ENCODE measurements at regions of chr2 and their contacts with region 1.

Region 1: DNA sequence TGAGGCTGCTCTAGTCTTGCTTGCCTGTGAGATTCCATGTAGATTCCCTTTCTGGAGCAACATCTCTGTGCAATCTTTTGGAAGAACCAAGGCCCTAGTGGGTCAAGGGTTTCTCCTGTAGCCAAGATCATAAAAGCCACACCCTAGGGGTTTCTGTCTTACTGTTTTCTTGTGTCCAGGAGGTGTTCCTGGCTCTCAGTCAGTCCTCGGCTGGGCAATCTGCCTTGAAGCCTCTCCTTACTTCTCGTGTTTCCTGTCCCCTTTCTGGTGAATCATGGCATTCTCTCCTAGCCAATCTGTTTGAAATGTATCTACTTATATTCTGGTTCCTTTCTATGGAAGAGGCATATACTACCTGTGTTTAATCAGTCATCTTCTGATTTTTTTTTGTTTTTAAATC is 484.8 kb upstream of the UBE2E3 start:
- DNase-seq: no peak
- ATAC-seq: no peak
- H3K4me3 ChIP-seq: no peak overlapping the region
- H3K4me3 Mint-ChIP-seq: no peak overlapping the region
- H3K27ac ChIP-seq: no peak overlapping the region
- H3K27ac Mint-ChIP-seq: no peak overlapping the region
- H3K4me1 ChIP-seq: no peaks in the 10 kb centered on the region
- H3K4me1 Mint-ChIP-seq: no peaks in the 10 kb centered on the region
- H3K27me3 ChIP-seq: no peaks in the 10 kb centered on the region
- H3K27me3 Mint-ChIP-seq: no peaks in the 10 kb centered on the region
- CTCF ChIP-seq: no peak

Region 2: GRCh38 chr2:180539541-180539940 is 43.9 kb after region 1 on chr2:
- CTCF ChIA-PET with region 1: no interaction called
- POLR2A ChIA-PET with region 1: no interaction called
- intact Hi-C with region 1: loop called in 1 of 2 experiments (anchors 1 kb)
- DNase-seq: peak in 1 of 14 experiments; percentile 3
- ATAC-seq: no peak
- H3K4me3 ChIP-seq: no peak overlapping the region
- H3K4me3 Mint-ChIP-seq: no peak overlapping the region
- H3K27ac ChIP-seq: no peak overlapping the region
- H3K27ac Mint-ChIP-seq: no peak overlapping the region
- H3K4me1 ChIP-seq: no peaks in the 10 kb centered on the region
- H3K4me1 Mint-ChIP-seq: no peaks in the 10 kb centered on the region
- H3K27me3 ChIP-seq: no peaks in the 10 kb centered on the region
- H3K27me3 Mint-ChIP-seq: no peaks in the 10 kb centered on the region
- CTCF ChIP-seq: no peak

Measured in CD4-positive, alpha-beta T cell (primary cell).